ENCODE measurements at regions of chrX and their contacts with region 1.

Region 1: DNA sequence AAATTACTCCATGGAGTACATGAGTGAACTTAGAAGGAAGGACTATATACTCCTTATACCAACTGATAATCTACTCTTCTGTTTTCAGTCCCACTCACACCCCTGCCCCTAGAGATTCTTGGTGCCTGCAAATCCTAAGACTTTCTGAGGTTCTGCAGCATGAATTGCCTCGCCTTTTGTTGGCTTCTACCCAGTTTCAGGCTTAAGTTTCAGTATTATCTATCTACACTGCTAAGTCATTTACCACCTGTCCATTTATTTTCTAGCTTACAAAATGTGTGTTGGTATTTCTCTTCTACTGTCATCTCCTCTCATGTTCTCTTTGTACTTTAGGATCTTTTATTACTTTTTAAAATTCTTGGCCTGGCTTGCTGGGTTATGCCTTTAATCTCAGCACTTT is 94.4 kb upstream of the AMOT start:
- DNase-seq: no peak
- H3K4me3 Mint-ChIP-seq: no peak overlapping the region
- H3K27ac Mint-ChIP-seq: no peak overlapping the region
- H3K4me1 Mint-ChIP-seq: no peaks in the 10 kb centered on the region
- H3K27me3 Mint-ChIP-seq: peaks cover 4% of the 10 kb centered on the region

Region 2: DNA sequence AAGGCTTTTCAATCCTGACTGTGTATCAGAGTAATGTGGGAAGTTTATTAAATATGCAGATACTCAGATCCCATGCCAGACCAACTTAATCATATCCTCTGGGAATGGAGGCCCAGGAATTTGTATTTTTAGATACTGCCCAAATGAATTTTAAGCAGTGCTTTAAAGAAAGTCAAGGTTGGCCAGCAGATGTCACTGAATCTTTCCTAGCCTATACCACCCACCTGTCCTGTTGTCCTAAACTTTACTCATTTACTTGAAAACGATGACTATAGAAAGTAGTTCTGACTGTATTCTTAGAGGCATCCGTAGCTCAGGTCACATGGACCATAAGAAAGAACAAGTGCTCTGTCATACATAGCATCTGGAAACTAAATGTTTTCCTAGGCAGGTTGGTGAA is 174.3 kb before region 1 on chrX:
- CTCF ChIA-PET with region 1: no interaction called
- intact Hi-C with region 1: loop called (anchors 10 kb)
- DNase-seq: no peak
- H3K4me3 Mint-ChIP-seq: no peak overlapping the region
- H3K27ac Mint-ChIP-seq: no peak overlapping the region
- H3K4me1 Mint-ChIP-seq: no peaks in the 10 kb centered on the region
- H3K27me3 Mint-ChIP-seq: peaks cover 5% of the 10 kb centered on the region

Region 3: DNA sequence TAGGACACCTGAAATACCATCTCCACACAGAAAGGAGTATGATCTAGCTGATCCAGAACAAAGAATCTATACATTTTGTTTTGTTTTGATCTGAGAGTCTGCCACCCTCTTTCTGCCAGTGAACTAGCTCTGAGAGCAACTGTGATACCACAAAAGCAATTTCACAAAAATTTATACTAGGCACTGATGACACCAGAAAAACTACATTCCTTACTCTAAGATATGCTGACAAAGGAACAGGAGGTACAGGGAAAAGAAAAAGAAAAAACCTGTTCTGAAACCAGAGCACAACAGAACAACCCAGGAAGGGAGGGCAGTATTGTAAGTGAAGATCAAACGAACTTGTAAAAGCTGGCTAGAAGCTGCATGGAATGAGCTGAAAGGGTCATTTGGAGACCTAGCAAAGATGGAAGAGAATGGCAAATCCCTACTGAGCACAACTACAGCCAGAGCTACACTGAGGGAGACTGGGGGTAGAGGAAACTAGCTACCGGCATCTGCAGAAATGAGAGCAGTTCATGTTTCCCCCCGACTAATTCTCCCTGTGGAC is 126.3 kb before region 1 on chrX:
- CTCF ChIA-PET with region 1: no interaction called
- intact Hi-C with region 1: no loop called
- DNase-seq: no peak
- H3K4me3 Mint-ChIP-seq: no peak overlapping the region
- H3K27ac Mint-ChIP-seq: no peak overlapping the region
- H3K4me1 Mint-ChIP-seq: no peaks in the 10 kb centered on the region
- H3K27me3 Mint-ChIP-seq: no peaks in the 10 kb centered on the region

Region 4: GRCh38 chrX:112913807-112914206 is 21.2 kb before region 1 on chrX:
- CTCF ChIA-PET with region 1: no interaction called
- intact Hi-C with region 1: no loop called
- DNase-seq: no peak
- H3K4me3 Mint-ChIP-seq: no peak overlapping the region
- H3K27ac Mint-ChIP-seq: no peak overlapping the region
- H3K4me1 Mint-ChIP-seq: no peaks in the 10 kb centered on the region
- H3K27me3 Mint-ChIP-seq: no peaks in the 10 kb centered on the region